ENCODE measurements at regions of chr5 and their contacts with region 1.

Region 1: GRCh38 chr5:142108432-142109330 is at the start of gene NDFIP1:
- DNase-seq: peak; percentile 79
- H3K4me3 ChIP-seq: peak within 1 kb of the TSS; percentile 86
- H3K27ac ChIP-seq: peak within 1 kb of the TSS; percentile 66
- H3K4me1 ChIP-seq: peaks cover 15% of the 10 kb centered on the region
- CTCF ChIP-seq: no peak; the same call in none of the 2 replicates
- total RNA-seq, gene NDFIP1: 15.4 and 18.7 TPM in 2 replicates

Region 2: DNA sequence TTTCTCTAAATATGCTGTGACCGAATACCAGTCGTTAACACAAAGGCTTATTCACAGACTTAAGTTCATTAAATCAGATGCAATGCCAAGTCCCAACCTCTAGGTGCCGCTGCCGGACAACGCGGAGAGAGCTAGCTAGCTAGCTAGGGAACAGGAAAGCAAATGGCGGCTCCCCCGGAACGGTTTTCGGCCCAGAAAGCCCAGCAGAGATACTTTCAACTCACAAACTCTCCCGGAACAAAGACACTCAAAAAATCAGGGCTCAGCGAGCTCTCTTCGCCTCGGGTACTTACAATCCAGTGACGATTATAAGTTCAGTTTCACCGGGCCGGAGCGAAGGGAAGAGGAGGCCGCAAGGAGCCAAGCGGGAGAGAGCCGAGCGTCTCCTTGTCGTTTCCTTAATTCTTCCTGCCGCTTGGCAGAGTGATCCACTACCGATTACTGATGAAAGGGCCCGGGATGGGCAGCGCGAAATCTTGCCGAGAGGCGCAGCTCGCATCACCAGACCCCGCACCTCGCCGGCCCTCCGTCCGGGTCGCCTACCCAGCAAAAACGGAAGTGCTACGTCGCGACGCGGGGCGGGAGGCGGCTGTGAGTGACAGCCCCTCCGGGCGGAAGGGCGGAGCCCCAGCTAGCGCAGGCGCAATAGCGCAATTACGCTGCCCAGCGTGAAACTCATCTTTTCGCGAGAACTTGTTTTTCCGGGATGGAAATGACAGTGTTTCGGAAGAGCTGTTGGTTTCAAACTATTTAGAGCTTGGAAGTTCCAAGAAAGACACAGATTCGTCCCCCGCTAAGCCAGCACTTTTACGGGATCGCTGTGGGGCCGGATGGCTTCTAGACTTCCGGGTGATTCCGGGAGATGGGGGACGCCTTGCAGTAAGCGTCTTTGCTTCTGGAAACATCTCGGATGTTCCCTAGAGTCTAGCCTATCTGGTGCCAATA is 788.2 kb before region 1 on chr5 and contains the start of gene TAF7:
- CTCF ChIA-PET with region 1: no interaction called
- POLR2A ChIA-PET with region 1: interaction called, 4 read pairs
- intact Hi-C with region 1: loop called (anchors 10 kb)
- DNase-seq: peak; percentile 97
- H3K4me3 ChIP-seq: peak within 1 kb of the TSS; percentile 96
- H3K27ac ChIP-seq: peak within 1 kb of the TSS; percentile 85
- H3K4me1 ChIP-seq: peaks cover 34% of the 10 kb centered on the region
- CTCF ChIP-seq: peak; percentile 96
- total RNA-seq, gene TAF7: 115 and 126 TPM in 2 replicates